ENCODE measurements at regions of chr7 and their contacts with region 1.

Region 1: GRCh38 chr7:134986363-134987251 is at the start of gene AGBL3:
- DNase-seq: peak; percentile 99
- ATAC-seq: peak; percentile 99
- total RNA-seq, gene AGBL3: 1.7 to 2.1 TPM

Region 2: DNA sequence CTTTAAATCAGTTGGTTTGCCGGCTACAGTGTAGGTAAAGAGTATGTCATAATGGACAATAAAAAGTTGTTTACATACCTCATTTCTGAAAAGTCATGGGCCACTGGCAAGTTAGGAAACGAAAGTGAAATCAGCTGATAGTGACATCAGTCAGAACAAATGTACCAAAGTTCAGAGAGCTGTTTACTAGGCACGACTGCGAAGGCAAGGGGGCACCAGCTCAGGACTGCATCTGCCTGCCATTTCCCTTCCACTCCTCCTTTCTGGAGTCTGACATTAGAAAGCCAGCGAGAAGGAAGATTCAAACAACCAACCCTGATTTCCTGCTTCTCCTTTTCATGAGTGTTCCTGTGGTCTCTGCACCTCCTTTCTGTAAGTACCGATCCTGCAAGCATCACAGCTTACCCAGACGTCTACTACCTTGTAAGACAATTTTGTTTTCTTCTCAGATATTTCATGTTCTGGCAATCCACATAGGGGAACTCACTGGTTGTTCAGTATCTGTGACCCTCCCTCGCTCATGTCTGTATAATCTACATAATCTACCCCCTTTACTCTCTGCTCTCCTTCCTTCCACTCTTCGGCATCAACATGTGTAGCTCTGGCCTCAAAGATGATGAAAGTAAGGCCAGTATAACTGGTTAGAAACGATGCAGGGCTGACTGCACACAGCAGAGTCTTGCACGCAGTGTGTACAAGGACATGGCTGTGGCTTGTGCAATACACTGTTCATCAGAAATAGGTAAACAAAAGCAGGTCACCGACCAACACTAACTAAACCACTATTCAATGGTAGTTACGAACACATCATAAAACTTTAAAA is 161.5 kb after region 1 on chr7 and contains the start of gene TMEM140:
- intact Hi-C with region 1: loop called in 1 of 2 experiments (anchors 10 kb)
- DNase-seq: no peak
- ATAC-seq: peak; percentile 70 to 86
- total RNA-seq, gene TMEM140: 10.0 to 12.0 TPM